ENCODE measurements at regions of chr4 and their contacts with region 1.

Region 1: DNA sequence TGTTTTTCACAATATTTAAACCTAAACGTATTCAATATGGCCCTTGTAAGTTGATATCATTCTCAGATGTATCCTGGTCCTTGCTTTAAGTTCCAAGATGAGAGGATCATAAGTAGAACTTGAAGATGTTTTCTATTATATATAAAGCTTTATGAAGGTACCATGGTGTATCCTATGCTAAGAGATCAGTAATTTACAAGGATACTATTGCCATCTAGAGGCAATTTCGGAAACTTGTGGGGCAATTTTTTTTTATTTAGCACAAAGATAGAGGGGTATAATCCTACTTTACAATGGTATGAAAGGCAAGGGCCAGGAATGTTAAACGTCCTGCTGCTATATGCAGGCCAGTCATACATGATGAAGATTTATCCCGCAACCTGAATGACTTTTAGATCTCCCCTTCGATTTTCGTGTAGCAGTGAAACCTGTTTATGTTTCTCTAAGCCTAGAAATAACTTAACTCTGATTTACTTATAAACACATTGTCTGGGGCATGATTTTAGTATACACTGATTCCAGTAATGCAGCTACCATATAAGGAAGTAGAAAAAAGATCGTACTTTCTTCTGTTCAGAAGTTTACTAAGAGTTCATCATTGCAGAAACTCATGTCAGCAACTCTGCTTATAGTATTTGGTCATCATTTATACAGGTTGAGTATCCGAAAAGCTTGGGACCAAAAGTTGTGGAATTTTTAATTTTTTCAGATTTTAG is 2.6 kb downstream of the SLC25A31 start:
- DNase-seq: peak; percentile 15
- H3K4me3 ChIP-seq: peak overlapping the region; percentile 11; the same call in 1 of the 2 replicates
- H3K27ac ChIP-seq: no peak overlapping the region
- H3K27me3 ChIP-seq: no peaks in the 10 kb centered on the region
- CTCF ChIP-seq: peak; percentile 63

Region 2: DNA sequence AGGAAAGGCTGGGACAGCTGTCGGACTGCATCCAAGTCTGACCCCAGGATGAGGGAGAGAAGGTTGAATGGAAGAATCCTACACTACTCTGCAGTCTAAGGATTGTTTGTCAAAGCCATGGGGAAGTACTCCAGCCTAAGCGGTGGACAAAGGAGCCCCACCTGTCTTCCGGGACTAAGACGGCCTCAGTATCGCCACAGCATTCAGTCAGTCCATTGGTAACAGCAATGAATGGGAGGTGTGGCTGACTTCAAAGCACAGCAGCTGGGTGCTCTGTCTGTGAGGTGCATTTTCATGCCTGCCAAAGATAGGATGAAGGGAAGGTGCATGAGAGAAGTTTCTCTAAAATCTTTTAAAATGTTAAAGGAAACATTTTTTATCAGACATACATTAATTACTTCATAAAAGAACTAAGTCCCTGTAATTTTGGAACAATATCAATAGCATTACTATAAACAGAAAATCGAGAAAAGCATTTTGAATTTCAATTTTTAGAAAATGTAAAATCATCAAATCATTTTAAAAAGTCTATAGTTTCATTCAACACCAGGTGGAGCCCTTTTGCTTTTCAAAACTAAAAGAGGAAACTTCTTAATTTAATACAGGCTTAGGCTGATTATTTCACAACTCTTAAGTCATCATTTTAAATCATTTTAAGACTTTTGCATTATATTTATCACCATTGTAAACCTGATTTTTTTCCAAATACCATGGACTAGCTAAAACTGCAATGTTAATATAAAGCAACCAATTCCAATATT is 127.6 kb before region 1 on chr4:
- CTCF ChIA-PET with region 1: interaction called, 201 read pairs
- POLR2A ChIA-PET with region 1: no interaction called
- DNase-seq: no peak
- H3K4me3 ChIP-seq: no peak overlapping the region
- H3K27ac ChIP-seq: no peak overlapping the region
- H3K27me3 ChIP-seq: no peaks in the 10 kb centered on the region
- CTCF ChIP-seq: peak; percentile 43

Region 3: DNA sequence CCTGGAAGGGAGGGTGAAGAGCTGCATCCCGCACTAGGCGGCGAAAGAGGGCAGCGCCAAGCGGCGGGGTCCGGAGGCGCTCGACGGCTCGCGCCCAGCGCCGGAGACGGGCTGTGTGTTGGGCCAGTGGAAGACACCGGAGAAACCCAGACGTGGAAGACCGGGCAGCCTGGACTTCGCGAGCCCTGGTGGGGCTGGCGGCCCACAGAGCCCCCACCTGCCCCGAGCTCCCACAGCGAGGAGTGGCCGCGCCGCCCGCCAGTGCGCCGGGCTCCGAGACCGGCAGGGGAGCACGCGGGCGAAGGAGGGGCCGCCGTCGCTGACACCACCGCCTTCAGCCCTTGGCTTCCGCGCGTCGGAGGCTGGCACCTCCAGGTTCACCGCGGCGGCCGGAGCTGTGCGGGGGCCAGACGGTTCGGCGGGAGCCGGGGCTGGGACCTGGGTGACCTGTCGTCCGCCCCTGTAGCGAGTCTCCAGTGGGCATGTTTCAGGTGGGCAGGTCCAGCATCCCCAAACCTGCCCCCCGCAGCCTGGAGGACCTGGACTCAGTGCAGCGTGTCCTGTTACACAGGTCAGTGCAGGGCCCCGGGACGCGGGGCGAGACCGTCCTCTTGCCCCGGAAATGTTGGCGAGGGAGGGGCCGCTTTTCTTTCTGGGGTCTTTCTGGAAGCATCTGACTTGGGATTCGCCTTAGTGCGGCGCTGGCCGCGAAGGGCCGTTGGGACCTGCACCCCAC is 109.7 kb before region 1 on chr4:
- CTCF ChIA-PET with region 1: interaction called, 39 read pairs
- POLR2A ChIA-PET with region 1: no interaction called
- DNase-seq: no peak
- H3K4me3 ChIP-seq: peak overlapping the region; percentile 73
- H3K27ac ChIP-seq: peak overlapping the region; percentile 23
- H3K27me3 ChIP-seq: no peaks in the 10 kb centered on the region
- CTCF ChIP-seq: peak; percentile 47

Region 4: GRCh38 chr4:127698789-127699200 is 34.0 kb before region 1 on chr4:
- CTCF ChIA-PET with region 1: interaction called, 10 read pairs
- POLR2A ChIA-PET with region 1: no interaction called
- DNase-seq: no peak
- H3K4me3 ChIP-seq: no peak overlapping the region
- H3K27ac ChIP-seq: no peak overlapping the region
- H3K27me3 ChIP-seq: no peaks in the 10 kb centered on the region
- CTCF ChIP-seq: no peak

Region 5: DNA sequence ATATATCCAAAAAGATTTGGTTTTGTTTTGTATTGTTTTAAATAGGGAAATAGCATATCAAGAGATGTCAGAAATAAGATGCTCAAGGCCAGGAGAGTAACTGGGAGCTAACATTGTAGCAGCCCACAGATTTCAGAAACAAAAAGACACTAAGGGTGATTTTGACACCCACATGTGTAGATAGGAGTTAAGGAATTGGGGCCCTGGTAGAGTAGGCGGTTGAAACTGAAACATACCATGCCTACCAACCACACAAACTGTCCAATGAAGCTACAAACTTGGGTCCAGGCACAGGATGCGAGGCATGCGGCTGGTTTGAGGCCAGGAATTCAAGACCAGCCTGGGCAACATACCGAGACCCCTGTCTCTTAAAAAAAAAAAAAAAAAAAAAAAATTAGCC is 43.1 kb after region 1 on chr4:
- CTCF ChIA-PET with region 1: interaction called, 16 read pairs
- POLR2A ChIA-PET with region 1: no interaction called
- DNase-seq: no peak
- H3K4me3 ChIP-seq: no peak overlapping the region
- H3K27ac ChIP-seq: no peak overlapping the region
- H3K27me3 ChIP-seq: peaks cover 4% of the 10 kb centered on the region
- CTCF ChIP-seq: no peak

Region 6: GRCh38 chr4:128141866-128142265 is 409.1 kb after region 1 on chr4:
- CTCF ChIA-PET with region 1: no interaction called
- POLR2A ChIA-PET with region 1: no interaction called
- DNase-seq: no peak
- H3K4me3 ChIP-seq: no peak overlapping the region
- H3K27ac ChIP-seq: no peak overlapping the region
- H3K27me3 ChIP-seq: no peaks in the 10 kb centered on the region
- CTCF ChIP-seq: no peak

Measured in AG04450 (cell line).